ENCODE measurements at regions of chr6 and their contacts with region 1.

Region 1: GRCh38 chr6:5143634-5144311 is 58.6 kb downstream of the PPP1R3G start:
- DNase-seq: peak; percentile 87
- ATAC-seq: peak; percentile 57 to 91 (median 78)
- H3K4me3 ChIP-seq: no peak overlapping the region
- H3K27ac ChIP-seq: no peak overlapping the region
- H3K4me1 ChIP-seq: peaks cover 0 to 7% (median 0%) of the 10 kb centered on the region in 9 donors
- H3K27me3 ChIP-seq: no peaks in the 10 kb centered on the region
- CTCF ChIP-seq: peak; percentile 90 to 98 (median 94)

Region 2: GRCh38 chr6:5030596-5031136 is 113.1 kb before region 1 on chr6:
- intact Hi-C with region 1: no loop called
- DNase-seq: peak; percentile 68 to 75
- ATAC-seq: peak in 7 of 8 donors; percentile 51 to 73 (median 63)
- H3K4me3 ChIP-seq: no peak overlapping the region
- H3K27ac ChIP-seq: no peak overlapping the region
- H3K4me1 ChIP-seq: peaks cover 0 to 22% (median 6%) of the 10 kb centered on the region in 9 donors
- H3K27me3 ChIP-seq: no peaks in the 10 kb centered on the region
- CTCF ChIP-seq: peak; percentile 35 to 74 (median 64)

Region 3: GRCh38 chr6:5214570-5215052 is 70.8 kb after region 1 on chr6:
- intact Hi-C with region 1: loop called in 9 of 10 experiments (anchors 1 to 10 kb)
- DNase-seq: peak; percentile 34 to 60
- ATAC-seq: peak; percentile 84 to 95 (median 92)
- H3K4me3 ChIP-seq: no peak overlapping the region
- H3K27ac ChIP-seq: peak overlapping the region in 6 of 10 donors; percentile 7 to 38 (median 30)
- H3K4me1 ChIP-seq: peaks cover 0 to 48% (median 16%) of the 10 kb centered on the region in 9 donors
- H3K27me3 ChIP-seq: no peaks in the 10 kb centered on the region
- CTCF ChIP-seq: peak; percentile 37 to 79 (median 70)

Region 4: GRCh38 chr6:5302995-5303622 is 159.3 kb after region 1 on chr6:
- intact Hi-C with region 1: loop called in 6 of 10 experiments (anchors 2 to 10 kb)
- DNase-seq: peak; percentile 22 to 23
- ATAC-seq: peak; percentile 11 to 92 (median 88)
- H3K4me3 ChIP-seq: no peak overlapping the region
- H3K27ac ChIP-seq: no peak overlapping the region
- H3K4me1 ChIP-seq: peaks cover 0 to 14% (median 0%) of the 10 kb centered on the region in 9 donors
- H3K27me3 ChIP-seq: no peaks in the 10 kb centered on the region
- CTCF ChIP-seq: peak; percentile 17 to 64 (median 56)

Region 5: DNA sequence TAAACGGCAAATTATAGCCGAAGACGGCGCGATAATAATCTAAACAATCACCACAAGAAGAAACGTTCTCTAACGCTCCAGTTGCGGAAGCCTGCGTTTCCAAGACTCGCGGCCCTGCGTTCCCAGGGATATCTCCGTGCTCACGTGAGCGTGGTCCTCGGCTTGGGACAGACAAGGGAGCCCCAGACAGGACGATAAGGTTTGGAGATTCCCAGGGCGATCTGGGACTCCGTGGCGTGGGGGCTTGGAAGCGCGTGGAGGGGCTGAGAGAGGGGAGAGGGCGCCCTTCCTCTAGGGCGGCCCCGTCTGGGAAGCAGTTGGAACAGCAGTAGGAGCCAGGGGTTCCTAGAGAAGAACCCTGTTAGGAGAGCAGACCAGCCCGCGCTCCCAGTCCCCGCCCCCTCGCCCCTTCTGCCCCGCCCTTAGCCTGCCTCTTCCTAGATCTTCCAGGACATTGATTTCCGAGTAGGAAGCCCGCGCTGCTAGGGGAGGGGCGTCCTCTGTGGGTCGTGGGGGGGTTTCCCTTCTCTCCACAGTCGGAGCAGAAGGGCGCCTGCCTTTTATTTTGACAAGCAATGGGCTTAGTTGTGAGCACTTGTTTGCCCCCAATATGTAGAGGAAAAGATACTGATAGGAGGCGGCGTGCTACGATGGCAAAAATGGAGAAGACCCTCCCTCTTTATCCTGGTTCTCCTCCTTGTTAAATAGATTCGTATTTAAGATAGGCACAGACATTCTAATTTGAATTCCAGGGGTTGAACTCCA is 852.4 kb after region 1 on chr6:
- intact Hi-C with region 1: loop called in 1 of 10 experiments (anchors 10 kb)
- DNase-seq: peak; percentile 79 to 84
- ATAC-seq: peak; percentile 77 to 91 (median 87)
- H3K4me3 ChIP-seq: peak overlapping the region; percentile 32 to 69 (median 60)
- H3K27ac ChIP-seq: peak overlapping the region; percentile 3 to 90 (median 82)
- H3K4me1 ChIP-seq: peaks cover 4 to 71% (median 46%) of the 10 kb centered on the region in 9 donors
- H3K27me3 ChIP-seq: peaks cover 37 to 99% (median 90%) of the 10 kb centered on the region in 7 donors
- CTCF ChIP-seq: peak in 7 of 9 donors; percentile 20 to 53 (median 44)

Region 6: GRCh38 chr6:6556738-6557505 is 1413.1 kb after region 1 on chr6:
- intact Hi-C with region 1: loop called in 1 of 10 experiments (anchors 10 kb)
- DNase-seq: peak; percentile 23 to 49
- ATAC-seq: peak; percentile 70 to 86 (median 76)
- H3K4me3 ChIP-seq: no peak overlapping the region
- H3K27ac ChIP-seq: no peak overlapping the region
- H3K4me1 ChIP-seq: peaks cover 0 to 14% (median 0%) of the 10 kb centered on the region in 9 donors
- H3K27me3 ChIP-seq: peaks cover 0 to 5% (median 0%) of the 10 kb centered on the region in 7 donors
- CTCF ChIP-seq: peak; percentile 80 to 96 (median 93)

Measured in heart right ventricle (tissue), 16 donors.